Body of pancreas (tissue), 4 donors: ENCODE measurements at regions of chr18 and their contacts with region 1.

Region 1: DNA sequence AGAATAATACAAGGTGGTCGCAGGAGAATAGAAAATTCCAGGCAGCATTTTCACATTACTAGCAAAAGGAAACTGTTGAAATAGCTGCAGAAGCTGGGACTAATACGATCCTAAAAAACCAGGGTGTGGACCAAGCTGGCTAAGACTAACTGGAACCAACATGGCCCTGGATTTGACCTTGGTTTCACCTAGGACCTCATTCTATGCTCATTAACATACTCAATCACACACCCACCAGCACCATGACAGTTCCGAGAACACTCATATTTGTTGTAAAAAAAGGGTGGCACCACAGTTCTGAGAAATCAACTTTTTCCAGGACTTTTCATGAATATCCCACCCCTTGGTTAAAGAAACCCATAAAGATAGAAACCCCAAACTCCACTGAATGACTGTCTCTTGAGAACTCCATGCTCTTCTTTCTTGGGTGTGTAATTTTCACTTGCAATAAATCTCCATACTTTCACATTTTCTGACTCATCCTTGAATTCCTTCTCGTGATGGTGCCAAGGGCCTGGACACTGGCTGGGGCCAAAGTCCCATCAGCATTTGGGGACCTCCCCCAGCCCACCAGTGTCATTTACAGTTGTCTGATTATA is 164.3 kb upstream of the CHST9 start:
- DNase-seq: no peak
- ATAC-seq: no peak
- H3K4me3 ChIP-seq: no peak overlapping the region
- H3K27ac ChIP-seq: no peak overlapping the region
- H3K4me1 ChIP-seq: no peaks in the 10 kb centered on the region
- H3K27me3 ChIP-seq: no peaks in the 10 kb centered on the region
- CTCF ChIP-seq: no peak
- POLR2A ChIP-seq: no peak

Region 2: GRCh38 chr18:27413495-27414401 is 64.4 kb after region 1 on chr18:
- intact Hi-C with region 1: loop called (anchors 10 kb)
- DNase-seq: peak in 2 of 4 donors; percentile 24 to 38
- ATAC-seq: peak; percentile 55
- H3K4me3 ChIP-seq: no peak overlapping the region
- H3K27ac ChIP-seq: peak overlapping the region in 2 of 4 donors; percentile 3 to 38
- H3K4me1 ChIP-seq: no peaks in the 10 kb centered on the region
- H3K27me3 ChIP-seq: no peaks in the 10 kb centered on the region
- CTCF ChIP-seq: no peak
- POLR2A ChIP-seq: no peak